ENCODE measurements at regions of chr22 and their contacts with region 1.

Region 1: DNA sequence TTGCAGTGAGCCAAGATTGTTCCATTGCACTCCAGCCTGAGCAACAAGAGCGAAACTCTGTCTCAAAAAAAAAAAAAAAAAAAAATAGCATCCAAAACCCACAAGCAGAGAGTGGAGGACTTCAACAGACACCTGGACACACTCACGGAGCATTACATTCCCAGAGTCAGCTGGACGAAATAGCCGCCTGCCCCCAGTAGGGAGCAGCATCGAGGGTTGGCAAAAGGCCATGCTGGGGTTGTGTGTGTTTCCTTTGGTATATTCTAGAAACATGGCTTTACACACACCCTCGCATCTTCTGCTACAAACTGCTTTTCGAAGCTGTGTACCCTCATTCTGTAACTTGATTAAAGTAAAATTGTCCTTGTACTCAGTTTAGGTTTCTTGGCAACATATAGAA is 5.3 kb downstream of the ADA2 start:
- DNase-seq: peak; percentile 56
- ATAC-seq: no peak
- H3K4me3 Mint-ChIP-seq: no peak overlapping the region
- H3K27ac Mint-ChIP-seq: peak overlapping the region; percentile 60
- H3K4me1 Mint-ChIP-seq: peaks cover 35% of the 10 kb centered on the region
- H3K27me3 Mint-ChIP-seq: no peaks in the 10 kb centered on the region

Region 2: DNA sequence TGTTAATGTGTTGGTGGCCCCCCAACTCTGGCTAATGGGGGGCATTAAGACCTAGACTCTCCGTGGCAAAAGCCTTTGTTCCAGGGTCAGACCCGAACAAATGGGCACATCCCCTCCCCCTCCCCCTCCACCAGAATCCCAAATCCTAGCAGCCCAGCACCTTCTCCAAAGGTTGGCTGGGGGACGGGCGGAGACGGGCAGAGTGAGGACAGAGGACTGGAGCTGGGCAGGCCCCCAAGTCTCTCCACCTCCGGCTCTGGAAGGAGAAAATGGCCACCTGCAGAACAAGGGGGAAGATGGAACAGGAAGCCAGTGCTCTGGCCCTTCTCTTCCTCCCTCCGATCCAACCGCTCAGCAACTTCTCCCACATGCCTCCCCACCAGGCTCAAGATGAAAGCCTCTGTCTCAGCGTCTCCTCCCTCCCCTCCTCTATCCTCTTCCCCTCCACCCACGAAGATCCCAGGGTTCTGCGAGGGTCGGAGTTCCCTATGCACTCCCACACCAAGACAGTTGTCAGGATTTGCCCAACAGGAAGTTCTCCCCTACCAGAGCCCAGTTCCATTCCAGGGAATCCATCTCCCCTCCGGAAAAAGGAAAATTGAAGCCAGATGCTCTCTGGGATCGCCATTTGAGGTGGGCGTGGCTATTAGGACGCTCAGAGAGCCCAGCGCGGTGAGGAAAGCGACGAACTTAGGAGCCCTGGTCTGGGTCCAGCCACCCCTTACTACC is 14.8 kb before region 1 on chr22:
- CTCF ChIA-PET with region 1: no interaction called
- POLR2A ChIA-PET with region 1: no interaction called
- DNase-seq: no peak
- ATAC-seq: no peak
- H3K4me3 Mint-ChIP-seq: no peak overlapping the region
- H3K27ac Mint-ChIP-seq: no peak overlapping the region
- H3K4me1 Mint-ChIP-seq: no peaks in the 10 kb centered on the region
- H3K27me3 Mint-ChIP-seq: no peaks in the 10 kb centered on the region

Region 3: DNA sequence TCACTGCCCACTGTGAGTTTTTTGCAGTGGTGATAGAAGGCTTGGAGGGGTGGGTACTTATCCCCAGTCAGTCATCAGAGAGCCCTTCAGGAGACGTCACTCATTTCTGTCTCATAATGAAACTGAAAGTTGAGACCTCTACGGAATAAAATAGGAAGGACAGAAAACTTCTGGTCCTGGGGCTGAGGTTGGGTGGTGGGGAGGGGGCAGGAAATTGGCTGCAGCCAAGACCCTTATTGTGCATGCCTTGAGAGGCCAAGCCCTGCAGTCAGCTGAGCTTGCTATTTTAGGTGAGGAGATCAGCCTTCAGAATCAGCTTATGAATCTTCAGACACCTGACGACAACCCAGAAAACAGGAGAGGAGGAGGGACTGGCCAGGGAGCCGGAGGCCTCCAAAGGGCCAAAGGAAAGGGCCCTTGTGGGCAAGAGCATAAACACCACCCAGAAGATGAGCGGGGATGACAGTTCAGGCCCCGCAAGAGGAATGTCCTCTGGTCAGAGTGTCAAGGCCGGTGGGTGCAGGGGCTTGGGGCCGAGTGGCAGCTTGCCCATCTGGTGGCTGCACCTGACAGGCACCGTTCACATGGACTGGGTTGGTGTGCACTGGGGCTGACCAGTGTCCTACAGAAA is 23.2 kb after region 1 on chr22:
- CTCF ChIA-PET with region 1: interaction called, 5 read pairs
- POLR2A ChIA-PET with region 1: interaction called, 24 read pairs
- DNase-seq: peak; percentile 65
- ATAC-seq: peak; percentile 93
- H3K4me3 Mint-ChIP-seq: peak overlapping the region; percentile 72
- H3K27ac Mint-ChIP-seq: peak overlapping the region; percentile 94
- H3K4me1 Mint-ChIP-seq: peaks cover 22% of the 10 kb centered on the region
- H3K27me3 Mint-ChIP-seq: no peaks in the 10 kb centered on the region

Region 4: DNA sequence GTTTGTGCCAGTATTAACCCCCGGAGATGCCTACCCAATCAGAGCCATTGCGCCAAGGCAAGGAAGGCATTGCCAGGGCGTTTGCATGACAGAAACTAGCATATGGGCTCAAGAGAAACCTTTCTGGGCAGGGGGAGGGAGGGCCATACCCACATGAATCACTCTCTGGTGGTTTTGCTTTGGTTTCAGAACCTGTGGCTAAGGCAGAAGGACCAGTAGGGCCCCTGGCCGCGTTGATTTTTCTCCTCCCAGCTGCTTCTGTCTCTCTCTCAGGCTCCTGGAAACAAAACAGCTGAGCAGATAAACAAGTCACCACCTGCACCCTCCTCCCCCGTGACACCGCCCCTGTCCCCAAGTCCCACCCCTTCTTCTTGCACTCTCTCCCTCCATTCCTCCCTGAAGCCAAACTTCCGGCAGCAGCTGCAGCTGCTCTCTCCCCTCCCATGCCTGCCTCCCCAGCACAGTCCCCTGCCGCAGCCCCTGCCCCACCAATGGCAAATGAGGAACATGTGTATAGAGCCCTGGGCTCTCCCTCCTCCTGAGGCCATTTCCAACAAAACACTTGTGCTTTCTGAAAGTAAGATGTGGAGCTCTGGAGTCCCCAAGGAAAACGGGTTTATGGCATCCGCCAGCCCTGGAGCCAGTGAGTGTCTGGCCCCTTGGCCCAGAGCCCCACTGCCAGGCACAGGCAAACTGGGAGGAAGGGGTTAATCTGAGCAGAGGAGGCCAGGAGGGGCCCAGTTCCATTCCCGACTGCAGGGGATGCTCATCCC is 44.2 kb after region 1 on chr22:
- CTCF ChIA-PET with region 1: interaction called, 3 read pairs
- POLR2A ChIA-PET with region 1: interaction called, 13 read pairs
- DNase-seq: peak; percentile 82
- ATAC-seq: peak; percentile 92
- H3K4me3 Mint-ChIP-seq: peak overlapping the region; percentile 42
- H3K27ac Mint-ChIP-seq: peak overlapping the region; percentile 76
- H3K4me1 Mint-ChIP-seq: peaks cover 33% of the 10 kb centered on the region
- H3K27me3 Mint-ChIP-seq: peaks cover 3% of the 10 kb centered on the region

Region 5: GRCh38 chr22:17266251-17266971 is 52.4 kb after region 1 on chr22:
- CTCF ChIA-PET with region 1: interaction called, 6 read pairs
- POLR2A ChIA-PET with region 1: interaction called, 11 read pairs
- DNase-seq: peak; percentile 51
- ATAC-seq: peak; percentile 71
- H3K4me3 Mint-ChIP-seq: no peak overlapping the region
- H3K27ac Mint-ChIP-seq: peak overlapping the region; percentile 78
- H3K4me1 Mint-ChIP-seq: peaks cover 33% of the 10 kb centered on the region
- H3K27me3 Mint-ChIP-seq: no peaks in the 10 kb centered on the region